ENCODE measurements at regions of chr5 and their contacts with region 1.

Region 1: GRCh38 chr5:179495906-179496455 is 54.4 kb upstream of the RUFY1 start:
- DNase-seq: peak; percentile 21
- H3K4me3 Mint-ChIP-seq: no peak overlapping the region
- H3K27ac Mint-ChIP-seq: no peak overlapping the region
- H3K4me1 Mint-ChIP-seq: no peaks in the 10 kb centered on the region
- H3K27me3 Mint-ChIP-seq: peaks cover 68% of the 10 kb centered on the region
- CTCF ChIP-seq: no peak

Region 2: GRCh38 chr5:178234750-178235587 is 1261.0 kb before region 1 on chr5:
- CTCF ChIA-PET with region 1: interaction called, 4 read pairs
- intact Hi-C with region 1: loop called (anchors 2 kb)
- DNase-seq: peak; percentile 82
- H3K4me3 Mint-ChIP-seq: no peak overlapping the region
- H3K27ac Mint-ChIP-seq: no peak overlapping the region
- H3K4me1 Mint-ChIP-seq: peaks cover 21% of the 10 kb centered on the region
- H3K27me3 Mint-ChIP-seq: no peaks in the 10 kb centered on the region
- CTCF ChIP-seq: peak; percentile 94

Region 3: DNA sequence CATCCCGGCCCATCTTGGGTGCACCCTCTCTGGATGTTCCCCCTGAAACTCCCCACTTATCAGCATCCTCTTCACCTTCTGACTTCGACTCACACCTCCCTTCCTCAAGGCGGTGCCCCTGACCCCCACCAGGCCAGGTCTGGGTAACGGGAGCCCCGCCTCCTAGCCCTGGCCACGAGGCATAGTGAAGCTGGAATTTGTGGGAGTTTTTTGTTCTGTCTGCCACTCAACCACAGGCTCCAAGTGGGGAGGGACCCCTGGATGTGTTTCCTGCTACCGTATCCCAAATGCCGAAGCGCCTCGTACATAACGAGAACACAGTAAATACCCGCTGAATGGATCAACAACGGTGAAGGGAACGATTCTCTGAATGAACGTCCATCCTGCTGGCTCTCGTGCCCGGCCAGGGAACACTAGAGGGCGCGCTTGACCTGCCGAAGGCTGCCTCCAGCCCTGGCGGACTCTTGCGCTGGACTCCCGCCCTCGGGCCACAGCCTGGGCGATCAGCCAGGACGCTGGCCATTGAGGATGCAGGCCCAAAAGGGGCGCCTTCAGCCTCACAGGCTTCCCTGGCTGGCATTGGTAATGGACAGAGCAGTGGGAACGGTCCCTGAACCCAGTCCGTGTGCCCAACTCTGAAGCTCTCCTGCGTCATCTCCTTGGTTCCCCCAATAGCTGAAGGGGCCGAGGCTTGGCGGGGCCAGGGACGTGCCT is 1216.1 kb before region 1 on chr5:
- CTCF ChIA-PET with region 1: interaction called, 10 read pairs
- intact Hi-C with region 1: no loop called
- DNase-seq: peak; percentile 94
- H3K4me3 Mint-ChIP-seq: peak overlapping the region; percentile 26
- H3K27ac Mint-ChIP-seq: no peak overlapping the region
- H3K4me1 Mint-ChIP-seq: peaks cover 12% of the 10 kb centered on the region
- H3K27me3 Mint-ChIP-seq: peaks cover 79% of the 10 kb centered on the region
- CTCF ChIP-seq: peak; percentile 85

Region 4: GRCh38 chr5:178732281-178732680 is 763.7 kb before region 1 on chr5:
- CTCF ChIA-PET with region 1: interaction called, 4 read pairs
- intact Hi-C with region 1: loop called (anchors 2 kb)
- DNase-seq: no peak
- H3K4me3 Mint-ChIP-seq: no peak overlapping the region
- H3K27ac Mint-ChIP-seq: no peak overlapping the region
- H3K4me1 Mint-ChIP-seq: no peaks in the 10 kb centered on the region
- H3K27me3 Mint-ChIP-seq: no peaks in the 10 kb centered on the region
- CTCF ChIP-seq: no peak

Region 5: GRCh38 chr5:179678223-179679013 is 182.4 kb after region 1 on chr5:
- CTCF ChIA-PET with region 1: no interaction called
- intact Hi-C with region 1: no loop called
- DNase-seq: peak; percentile 96
- H3K4me3 Mint-ChIP-seq: peak overlapping the region; percentile 100
- H3K27ac Mint-ChIP-seq: peak overlapping the region; percentile 97
- H3K4me1 Mint-ChIP-seq: peaks cover 31% of the 10 kb centered on the region
- H3K27me3 Mint-ChIP-seq: no peaks in the 10 kb centered on the region
- CTCF ChIP-seq: no peak